ENCODE measurements at regions of chr3 and their contacts with region 1.

Region 1: DNA sequence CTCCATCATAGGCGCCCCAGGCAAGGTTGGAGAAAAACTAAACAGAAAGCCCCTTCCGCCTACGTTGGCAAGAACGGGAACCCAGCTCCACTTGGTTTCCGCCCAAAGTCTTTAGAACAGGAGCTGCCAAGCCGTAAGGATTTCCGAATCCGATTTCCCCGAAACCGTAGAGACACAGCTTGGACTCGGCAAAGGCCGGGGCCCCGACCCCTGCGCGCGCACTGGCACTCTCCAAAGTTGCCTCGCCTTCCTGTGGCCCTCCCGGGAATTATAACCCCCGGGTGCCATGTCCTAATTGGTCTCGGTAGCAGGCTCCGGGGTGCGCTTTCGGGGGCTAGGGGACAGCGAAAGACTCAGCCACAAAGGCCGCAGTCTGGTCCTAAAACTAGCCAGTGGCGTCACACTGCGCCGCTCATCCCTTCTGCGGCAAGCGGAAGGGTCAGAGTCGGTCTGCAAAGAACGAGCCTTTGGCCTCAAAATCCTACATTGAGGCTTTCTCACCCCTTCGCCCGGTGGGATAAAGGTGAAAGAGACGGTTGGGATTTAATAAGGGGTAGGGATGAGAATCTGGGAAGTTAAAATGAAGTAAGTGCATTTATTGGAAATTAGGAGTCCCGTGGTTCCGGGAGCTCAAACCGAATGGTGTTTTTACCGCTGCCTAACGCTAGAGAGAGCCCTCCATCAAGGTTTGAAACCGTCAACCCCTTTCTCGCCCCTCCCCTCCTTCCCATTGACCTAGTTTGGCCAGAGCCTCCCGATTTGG is 6.8 kb downstream of the BCL6 start:
- DNase-seq: peak; percentile 85
- H3K4me3 Mint-ChIP-seq: peak overlapping the region; percentile 86
- H3K27ac Mint-ChIP-seq: peak overlapping the region; percentile 97
- H3K4me1 Mint-ChIP-seq: peaks cover 35% of the 10 kb centered on the region
- H3K27me3 Mint-ChIP-seq: no peaks in the 10 kb centered on the region

Region 2: GRCh38 chr3:187919048-187919447 is 180.5 kb after region 1 on chr3:
- CTCF ChIA-PET with region 1: interaction called, 12 read pairs
- intact Hi-C with region 1: no loop called
- DNase-seq: peak; percentile 77
- H3K4me3 Mint-ChIP-seq: peak overlapping the region; percentile 60
- H3K27ac Mint-ChIP-seq: peak overlapping the region; percentile 94
- H3K4me1 Mint-ChIP-seq: peaks cover 83% of the 10 kb centered on the region
- H3K27me3 Mint-ChIP-seq: no peaks in the 10 kb centered on the region

Region 3: GRCh38 chr3:188154014-188154808 is 415.7 kb after region 1 on chr3 and contains the start of gene LPP:
- CTCF ChIA-PET with region 1: interaction called, 5 read pairs
- intact Hi-C with region 1: loop called (anchors 1 kb)
- DNase-seq: peak; percentile 88
- H3K4me3 Mint-ChIP-seq: peak within 1 kb of the TSS; percentile 83
- H3K27ac Mint-ChIP-seq: peak within 1 kb of the TSS; percentile 89
- H3K4me1 Mint-ChIP-seq: peaks cover 54% of the 10 kb centered on the region
- H3K27me3 Mint-ChIP-seq: no peaks in the 10 kb centered on the region
- total RNA-seq, gene LPP: 27.5 to 31.8 TPM

Region 4: GRCh38 chr3:188303286-188303813 is 564.8 kb after region 1 on chr3:
- CTCF ChIA-PET with region 1: interaction called, 10 read pairs
- intact Hi-C with region 1: loop called (anchors 1 kb)
- DNase-seq: no peak
- H3K4me3 Mint-ChIP-seq: no peak overlapping the region
- H3K27ac Mint-ChIP-seq: no peak overlapping the region
- H3K4me1 Mint-ChIP-seq: peaks cover 40% of the 10 kb centered on the region
- H3K27me3 Mint-ChIP-seq: no peaks in the 10 kb centered on the region

Region 5: GRCh38 chr3:188439080-188439479 is 700.6 kb after region 1 on chr3:
- CTCF ChIA-PET with region 1: no interaction called
- intact Hi-C with region 1: loop called (anchors 5 kb)
- DNase-seq: peak; percentile 51
- H3K4me3 Mint-ChIP-seq: no peak overlapping the region
- H3K27ac Mint-ChIP-seq: peak overlapping the region; percentile 61
- H3K4me1 Mint-ChIP-seq: peaks cover 38% of the 10 kb centered on the region
- H3K27me3 Mint-ChIP-seq: no peaks in the 10 kb centered on the region

Region 6: DNA sequence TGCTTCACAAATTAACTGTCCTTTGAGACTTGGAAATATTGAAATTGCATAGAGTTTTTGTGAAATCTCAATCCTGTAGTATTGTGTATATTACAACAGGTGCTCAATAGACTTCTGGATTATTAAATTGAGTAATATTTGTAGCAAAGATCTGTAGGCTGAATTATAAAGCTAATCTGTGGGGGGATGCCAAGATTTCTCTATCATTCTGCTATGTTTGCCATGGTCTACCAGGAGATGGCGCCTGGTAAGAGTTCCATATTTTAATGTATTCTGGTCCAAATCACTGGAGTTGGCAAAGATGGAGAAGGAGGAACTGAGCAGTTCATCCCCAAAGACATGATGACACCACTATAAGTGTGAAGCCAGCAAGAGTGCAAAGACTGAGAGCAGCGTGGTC is 1092.4 kb after region 1 on chr3:
- CTCF ChIA-PET with region 1: interaction called, 3 read pairs
- intact Hi-C with region 1: loop called (anchors 5 kb)
- DNase-seq: peak; percentile 7
- H3K4me3 Mint-ChIP-seq: no peak overlapping the region
- H3K27ac Mint-ChIP-seq: no peak overlapping the region
- H3K4me1 Mint-ChIP-seq: peaks cover 21% of the 10 kb centered on the region
- H3K27me3 Mint-ChIP-seq: no peaks in the 10 kb centered on the region

Region 7: DNA sequence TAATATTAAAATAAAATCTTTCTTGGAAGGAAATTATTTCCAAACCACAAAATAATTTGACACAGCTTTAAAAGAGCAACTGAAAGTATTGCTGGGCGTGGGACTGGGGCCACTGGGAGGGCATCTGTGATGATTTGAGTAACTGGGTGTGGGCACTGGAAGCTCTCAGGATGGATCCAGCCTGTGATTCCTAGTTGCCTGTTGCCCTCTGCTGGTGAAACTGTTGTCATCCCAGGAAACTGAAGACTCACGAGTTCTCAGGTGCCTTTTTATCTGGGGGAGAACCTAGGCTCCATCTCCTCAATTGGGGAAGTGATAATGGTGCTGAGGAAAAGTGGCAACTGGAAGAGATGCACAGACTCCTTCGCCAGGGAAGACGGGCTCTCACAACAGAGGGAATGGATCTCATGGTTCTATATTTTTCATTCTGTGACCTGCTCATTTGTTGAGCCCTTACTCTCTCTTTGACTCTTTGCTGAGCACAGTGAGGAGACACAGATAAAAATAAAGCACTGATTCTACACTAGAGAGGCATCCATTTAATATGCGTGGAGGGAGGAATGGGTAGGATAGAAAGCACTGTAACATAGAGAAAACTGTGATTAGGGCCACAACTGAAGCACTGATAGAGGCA is 1494.8 kb after region 1 on chr3:
- CTCF ChIA-PET with region 1: interaction called, 3 read pairs
- intact Hi-C with region 1: loop called (anchors 5 kb)
- DNase-seq: peak; percentile 48
- H3K4me3 Mint-ChIP-seq: no peak overlapping the region
- H3K27ac Mint-ChIP-seq: no peak overlapping the region
- H3K4me1 Mint-ChIP-seq: peaks cover 4% of the 10 kb centered on the region
- H3K27me3 Mint-ChIP-seq: no peaks in the 10 kb centered on the region

Measured in activated naive CD4-positive, alpha-beta T cell treated with anti-CD3 and anti-CD28 coated beads for 36 hours (primary cell).